ENCODE measurements at regions of chr4 and their contacts with region 1.

Region 1: GRCh38 chr4:25330905-25331808 is 18.6 kb downstream of the ZCCHC4 start:
- DNase-seq: no peak
- ATAC-seq: peak; percentile 90
- H3K4me3 Mint-ChIP-seq: peak overlapping the region; percentile 82
- H3K27ac Mint-ChIP-seq: peak overlapping the region; percentile 96
- H3K4me1 Mint-ChIP-seq: peaks cover 19% of the 10 kb centered on the region
- H3K27me3 Mint-ChIP-seq: no peaks in the 10 kb centered on the region

Region 2: DNA sequence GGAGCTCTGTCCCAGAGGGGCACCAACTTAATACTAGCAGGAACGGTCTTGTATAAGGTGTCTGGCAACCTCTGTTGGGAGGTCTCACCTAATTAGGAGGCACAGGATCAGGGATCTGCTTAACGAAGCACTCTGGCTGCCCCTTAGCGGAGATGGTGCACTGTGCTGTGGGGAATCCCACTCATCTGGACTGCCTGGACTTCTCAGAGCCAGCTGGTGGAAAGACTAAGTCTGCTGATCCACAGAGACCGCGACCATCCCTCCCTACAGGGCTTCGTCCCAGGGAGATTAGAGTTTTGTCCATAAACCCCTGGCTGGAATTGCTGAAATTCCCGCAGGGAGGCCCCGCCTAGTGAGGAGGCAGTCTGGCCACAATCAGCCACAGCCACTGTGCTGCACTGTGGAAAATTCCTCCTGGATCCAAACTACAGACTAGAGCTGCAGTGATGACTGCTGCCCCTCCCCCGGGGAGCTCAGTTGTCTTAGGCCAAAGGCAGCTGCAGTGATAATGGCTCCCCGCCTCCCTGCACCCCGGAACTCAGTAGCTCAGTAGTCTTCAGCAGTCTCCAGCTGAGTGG is 40.6 kb before region 1 on chr4:
- CTCF ChIA-PET with region 1: no interaction called
- POLR2A ChIA-PET with region 1: no interaction called
- DNase-seq: no peak
- ATAC-seq: no peak
- H3K4me3 Mint-ChIP-seq: no peak overlapping the region
- H3K27ac Mint-ChIP-seq: no peak overlapping the region
- H3K4me1 Mint-ChIP-seq: no peaks in the 10 kb centered on the region
- H3K27me3 Mint-ChIP-seq: peaks cover 23% of the 10 kb centered on the region

Region 3: GRCh38 chr4:25320773-25321172 is 10.4 kb before region 1 on chr4:
- CTCF ChIA-PET with region 1: interaction called, 14 read pairs
- POLR2A ChIA-PET with region 1: interaction called, 5 read pairs
- DNase-seq: no peak
- ATAC-seq: peak; percentile 60
- H3K4me3 Mint-ChIP-seq: no peak overlapping the region
- H3K27ac Mint-ChIP-seq: peak overlapping the region; percentile 76
- H3K4me1 Mint-ChIP-seq: peaks cover 36% of the 10 kb centered on the region
- H3K27me3 Mint-ChIP-seq: no peaks in the 10 kb centered on the region

Region 4: GRCh38 chr4:25376754-25377571 is 45.8 kb after region 1 on chr4 and contains the start of gene ANAPC4:
- CTCF ChIA-PET with region 1: no interaction called
- POLR2A ChIA-PET with region 1: interaction called, 12 read pairs
- DNase-seq: peak; percentile 99
- ATAC-seq: peak; percentile 96
- H3K4me3 Mint-ChIP-seq: no peak within 1 kb of the TSS
- H3K27ac Mint-ChIP-seq: peak within 1 kb of the TSS; percentile 91
- H3K4me1 Mint-ChIP-seq: peaks cover 15% of the 10 kb centered on the region
- H3K27me3 Mint-ChIP-seq: no peaks in the 10 kb centered on the region
- total RNA-seq, gene ANAPC4: 45.4 to 48.6 TPM

Measured in activated CD8-positive, alpha-beta T cell treated with anti-CD3 and anti-CD28 coated beads, Interleukin-2, amount 10 ng/mL, durations not matched to agents 7 days and 5 days (primary cell).